ENCODE measurements at regions of chr16 and their contacts with region 1.

Region 1: GRCh38 chr16:67100569-67101310 is 9.0 kb upstream of the PHAF1 start:
- DNase-seq: peak in 1 of 2 donors; percentile 57
- ATAC-seq: no peak
- H3K4me3 ChIP-seq: no peak overlapping the region
- H3K4me3 Mint-ChIP-seq: no peak overlapping the region
- H3K27ac ChIP-seq: no peak overlapping the region
- H3K27ac Mint-ChIP-seq: no peak overlapping the region
- H3K4me1 ChIP-seq: no peaks in the 10 kb centered on the region
- H3K4me1 Mint-ChIP-seq: no peaks in the 10 kb centered on the region
- H3K27me3 ChIP-seq: no peaks in the 10 kb centered on the region
- H3K27me3 Mint-ChIP-seq: no peaks in the 10 kb centered on the region
- CTCF ChIP-seq: no peak

Region 2: DNA sequence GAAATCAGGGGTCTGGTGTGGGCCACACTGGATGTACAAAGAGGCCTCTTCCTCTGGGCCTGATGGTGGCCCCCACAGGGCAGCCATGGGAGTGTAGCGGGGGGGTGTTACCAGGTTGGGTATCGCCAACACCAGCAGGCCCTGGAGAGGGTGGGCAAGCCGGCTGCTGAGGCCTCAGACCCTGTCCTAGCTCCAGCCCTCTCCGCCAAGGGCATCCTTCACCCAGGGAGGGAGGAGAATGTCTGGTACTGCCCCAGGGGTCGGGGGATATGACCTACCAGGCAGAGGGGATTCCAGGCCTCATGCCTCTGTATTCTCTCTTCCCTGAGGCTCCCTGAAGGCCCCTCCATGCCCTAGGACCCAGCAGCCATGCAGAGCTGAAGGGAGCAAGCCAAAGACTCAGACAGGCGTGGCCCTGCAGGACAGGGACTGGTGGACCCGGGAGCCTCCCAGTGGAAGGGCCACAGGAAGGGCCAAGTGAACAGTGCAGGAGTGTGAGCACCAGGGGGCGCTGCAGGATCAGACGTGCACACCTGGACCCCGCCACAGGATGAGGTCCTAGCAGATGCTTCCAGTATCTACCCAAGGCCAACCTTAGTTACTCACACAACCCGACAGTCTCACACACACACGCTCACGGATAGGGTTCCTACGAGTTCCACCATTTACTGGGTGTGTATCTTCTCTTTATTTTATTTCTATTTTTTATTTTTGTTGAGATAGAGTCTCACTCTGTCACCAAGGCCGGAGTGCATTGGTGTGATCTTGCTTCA is 123.2 kb before region 1 on chr16:
- intact Hi-C with region 1: loop called (anchors 2 kb)
- DNase-seq: peak; percentile 88 to 93
- ATAC-seq: peak; percentile 93 to 100 (median 99)
- H3K4me3 ChIP-seq: no peak overlapping the region
- H3K4me3 Mint-ChIP-seq: no peak overlapping the region
- H3K27ac ChIP-seq: no peak overlapping the region
- H3K27ac Mint-ChIP-seq: no peak overlapping the region
- H3K4me1 ChIP-seq: no peaks in the 10 kb centered on the region
- H3K4me1 Mint-ChIP-seq: no peaks in the 10 kb centered on the region
- H3K27me3 ChIP-seq: no peaks in the 10 kb centered on the region
- H3K27me3 Mint-ChIP-seq: peaks cover 0 to 4% of the 10 kb centered on the region in 2 donors
- CTCF ChIP-seq: peak; percentile 92

Region 3: DNA sequence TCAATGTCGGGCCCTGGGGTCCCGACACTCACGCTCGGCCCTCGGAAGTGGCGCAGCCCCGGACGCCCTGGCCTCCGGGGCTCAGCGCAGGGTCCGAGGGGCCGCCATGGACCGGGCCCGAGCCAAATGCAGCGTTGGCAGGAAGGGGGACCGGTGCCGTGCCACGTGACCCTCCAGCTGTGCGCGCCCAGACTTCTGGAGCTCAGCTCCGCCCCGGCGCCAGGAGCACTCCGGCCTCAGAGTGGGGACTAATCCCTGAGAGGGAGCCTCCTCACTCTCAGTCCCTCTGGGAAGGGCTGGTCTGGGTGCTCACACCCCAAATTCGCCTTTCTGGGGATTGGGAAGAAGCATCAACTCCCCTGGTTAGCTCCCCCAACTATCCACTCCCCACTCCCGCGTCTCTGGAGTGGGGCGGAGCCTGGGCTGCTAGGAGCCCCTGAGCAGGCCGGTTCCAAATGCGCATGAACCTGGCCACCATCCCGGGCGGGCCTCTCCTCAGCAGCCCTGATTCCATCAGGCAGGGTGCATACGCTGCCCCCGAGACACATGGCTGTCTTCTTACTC is 50.2 kb after region 1 on chr16 and contains the start of gene B3GNT9:
- intact Hi-C with region 1: no loop called
- DNase-seq: peak in 1 of 2 donors; percentile 56
- ATAC-seq: no peak
- H3K4me3 ChIP-seq: peak within 1 kb of the TSS; percentile 13
- H3K4me3 Mint-ChIP-seq: peak within 1 kb of the TSS; percentile 74
- H3K27ac ChIP-seq: no peak within 1 kb of the TSS
- H3K27ac Mint-ChIP-seq: no peak within 1 kb of the TSS
- H3K4me1 ChIP-seq: peaks cover 20% of the 10 kb centered on the region
- H3K4me1 Mint-ChIP-seq: peaks cover 0 to 21% of the 10 kb centered on the region in 2 donors
- H3K27me3 ChIP-seq: peaks cover 7% of the 10 kb centered on the region
- H3K27me3 Mint-ChIP-seq: peaks cover 7 to 21% of the 10 kb centered on the region in 2 donors
- CTCF ChIP-seq: no peak
- total RNA-seq, gene B3GNT9: 0.80 to 1.3 (median 1.0) TPM

Measured in natural killer cell (primary cell).